ENCODE measurements at regions of chr2 and their contacts with region 1.

Region 1: GRCh38 chr2:147937744-147938349 is 82.7 kb downstream of the ORC4 start:
- DNase-seq: no peak
- H3K4me3 ChIP-seq: no peak overlapping the region
- H3K27ac ChIP-seq: no peak overlapping the region
- H3K4me1 ChIP-seq: peaks cover 0 to 6% (median 0%) of the 10 kb centered on the region in 3 donors
- H3K27me3 ChIP-seq: no peaks in the 10 kb centered on the region
- CTCF ChIP-seq: peak; percentile 54 to 89 (median 84)
- POLR2A ChIP-seq: no peak

Region 2: DNA sequence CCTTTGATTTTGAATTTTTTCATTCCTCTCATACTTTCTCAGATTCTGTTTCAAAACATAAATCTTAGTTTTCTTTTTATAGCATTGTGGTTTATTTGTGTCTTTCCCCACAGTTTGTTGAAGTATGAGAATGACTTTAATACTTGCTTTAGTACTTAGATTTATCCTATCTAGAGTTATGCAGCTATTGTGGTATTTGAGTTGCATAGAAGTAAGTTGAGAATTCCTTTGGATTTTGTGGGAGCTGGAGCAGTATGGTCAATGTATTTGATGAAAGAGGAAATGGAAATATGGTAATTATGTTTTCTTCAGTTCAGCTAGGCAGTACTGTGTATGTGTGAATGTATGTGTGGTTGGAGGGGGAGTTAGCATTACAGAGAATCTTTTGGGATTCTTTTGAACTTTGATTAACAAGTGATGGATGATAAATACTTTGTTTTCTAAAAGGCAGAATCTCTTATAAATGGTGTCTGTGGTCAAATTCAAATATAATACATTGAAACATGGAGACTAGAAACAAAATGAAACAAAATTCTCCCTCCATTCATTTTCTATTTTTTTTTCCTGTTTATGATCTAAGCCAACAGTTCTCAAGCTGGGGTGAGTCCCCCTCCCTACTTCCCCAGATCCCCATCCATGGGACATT is 90.0 kb before region 1 on chr2:
- intact Hi-C with region 1: no loop called
- DNase-seq: no peak
- H3K4me3 ChIP-seq: no peak overlapping the region
- H3K27ac ChIP-seq: no peak overlapping the region
- H3K4me1 ChIP-seq: peaks cover 11 to 71% (median 12%) of the 10 kb centered on the region in 3 donors
- H3K27me3 ChIP-seq: no peaks in the 10 kb centered on the region
- CTCF ChIP-seq: no peak
- POLR2A ChIP-seq: no peak

Region 3: DNA sequence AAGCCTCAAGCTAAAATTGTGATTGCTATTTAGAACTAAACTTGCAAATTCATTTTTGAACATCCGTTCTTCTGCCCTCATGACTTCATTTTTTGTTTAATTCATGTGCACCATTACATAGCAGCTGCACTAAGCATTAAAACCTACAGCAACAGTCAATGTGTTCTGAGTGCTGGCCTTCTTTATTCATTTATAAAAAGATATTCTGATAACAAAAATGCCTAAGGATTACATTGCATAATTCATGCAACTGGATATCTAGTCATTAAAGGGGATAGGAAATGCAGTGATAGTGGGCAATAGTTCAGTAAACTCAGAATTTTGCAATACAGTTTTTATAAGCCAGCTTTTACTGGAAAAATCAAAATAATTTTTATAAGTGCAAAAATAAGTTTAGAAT is 412.4 kb after region 1 on chr2:
- intact Hi-C with region 1: no loop called
- DNase-seq: no peak
- H3K4me3 ChIP-seq: no peak overlapping the region
- H3K27ac ChIP-seq: no peak overlapping the region
- H3K4me1 ChIP-seq: no peaks in the 10 kb centered on the region
- H3K27me3 ChIP-seq: no peaks in the 10 kb centered on the region
- CTCF ChIP-seq: no peak
- POLR2A ChIP-seq: no peak

Region 4: GRCh38 chr2:148509288-148509902 is 571.5 kb after region 1 on chr2:
- intact Hi-C with region 1: loop called (anchors 5 kb)
- DNase-seq: peak; percentile 32
- H3K4me3 ChIP-seq: peak overlapping the region; percentile 8 to 63 (median 28)
- H3K27ac ChIP-seq: no peak overlapping the region
- H3K4me1 ChIP-seq: peaks cover 0 to 9% (median 5%) of the 10 kb centered on the region in 3 donors
- H3K27me3 ChIP-seq: peaks cover 0 to 3% (median 0%) of the 10 kb centered on the region in 4 donors
- CTCF ChIP-seq: peak; percentile 55 to 91 (median 86)
- POLR2A ChIP-seq: no peak

Region 5: GRCh38 chr2:148989882-148990493 is 1052.1 kb after region 1 on chr2:
- intact Hi-C with region 1: loop called (anchors 10 kb)
- DNase-seq: no peak
- H3K4me3 ChIP-seq: no peak overlapping the region
- H3K27ac ChIP-seq: no peak overlapping the region
- H3K4me1 ChIP-seq: no peaks in the 10 kb centered on the region
- H3K27me3 ChIP-seq: peaks cover 0 to 13% (median 0%) of the 10 kb centered on the region in 4 donors
- CTCF ChIP-seq: peak; percentile 30 to 79 (median 64)
- POLR2A ChIP-seq: no peak